HepG2 (cell line): ENCODE measurements at regions of chr1 and their contacts with region 1.

Region 1: DNA sequence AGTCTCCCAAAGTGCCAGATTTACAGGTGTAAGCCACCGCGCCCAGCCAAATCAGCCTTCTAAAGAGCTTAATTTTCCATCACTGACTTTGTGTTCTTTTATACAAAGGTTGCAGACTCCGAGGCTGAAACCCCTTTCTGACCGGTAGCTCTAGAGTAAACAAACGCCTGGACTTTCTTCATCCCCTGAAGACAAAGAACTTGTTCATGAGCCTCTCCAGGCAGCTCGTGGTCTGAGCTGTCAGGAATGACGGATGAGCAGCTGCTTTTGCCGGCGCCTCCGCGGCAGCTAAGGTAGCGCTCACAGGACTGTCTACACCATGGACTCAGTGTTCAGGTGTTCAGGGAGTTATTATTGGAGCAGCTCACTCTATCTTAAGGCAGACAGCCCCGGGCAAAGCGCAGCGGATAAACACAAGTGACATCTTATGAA is 128.5 kb upstream of the ERRFI1 start:
- DNase-seq: peak; percentile 99
- ATAC-seq: peak; percentile 97
- H3K4me3 ChIP-seq: peak overlapping the region in 2 of 3 experiments; percentile 15 to 31; a peak in 2 of 6 replicates
- H3K27ac ChIP-seq: peak overlapping the region; percentile 88
- H3K4me1 ChIP-seq: peaks cover 82% of the 10 kb centered on the region
- H3K27me3 ChIP-seq: no peaks in the 10 kb centered on the region
- CTCF ChIP-seq: no peak
- EP300 ChIP-seq: peak; percentile 89 to 97; a peak in 3 of 4 replicates
- POLR2A ChIP-seq: peak in 1 of 2 experiments; percentile 16; a peak in 1 of 4 replicates
- RAD21 ChIP-seq: peak; percentile 44; the same call in 1 of the 2 replicates

Region 2: GRCh38 chr1:7149080-7149838 is 1005.4 kb before region 1 on chr1:
- CTCF ChIA-PET with region 1: no interaction called
- POLR2A ChIA-PET with region 1: no interaction called
- in situ Hi-C with region 1: no loop called
- intact Hi-C with region 1: no loop called
- DNase-seq: no peak
- ATAC-seq: peak; percentile 71
- H3K4me3 ChIP-seq: peak overlapping the region in 1 of 3 experiments; percentile 47; a peak in 1 of 6 replicates
- H3K27ac ChIP-seq: no peak overlapping the region
- H3K4me1 ChIP-seq: peaks cover 10% of the 10 kb centered on the region
- H3K27me3 ChIP-seq: peaks cover 2 to 8% of the 10 kb centered on the region in 2 experiments; a peak in 3 of 5 replicates
- CTCF ChIP-seq: no peak
- EP300 ChIP-seq: no peak
- POLR2A ChIP-seq: no peak
- RAD21 ChIP-seq: no peak

Region 3: DNA sequence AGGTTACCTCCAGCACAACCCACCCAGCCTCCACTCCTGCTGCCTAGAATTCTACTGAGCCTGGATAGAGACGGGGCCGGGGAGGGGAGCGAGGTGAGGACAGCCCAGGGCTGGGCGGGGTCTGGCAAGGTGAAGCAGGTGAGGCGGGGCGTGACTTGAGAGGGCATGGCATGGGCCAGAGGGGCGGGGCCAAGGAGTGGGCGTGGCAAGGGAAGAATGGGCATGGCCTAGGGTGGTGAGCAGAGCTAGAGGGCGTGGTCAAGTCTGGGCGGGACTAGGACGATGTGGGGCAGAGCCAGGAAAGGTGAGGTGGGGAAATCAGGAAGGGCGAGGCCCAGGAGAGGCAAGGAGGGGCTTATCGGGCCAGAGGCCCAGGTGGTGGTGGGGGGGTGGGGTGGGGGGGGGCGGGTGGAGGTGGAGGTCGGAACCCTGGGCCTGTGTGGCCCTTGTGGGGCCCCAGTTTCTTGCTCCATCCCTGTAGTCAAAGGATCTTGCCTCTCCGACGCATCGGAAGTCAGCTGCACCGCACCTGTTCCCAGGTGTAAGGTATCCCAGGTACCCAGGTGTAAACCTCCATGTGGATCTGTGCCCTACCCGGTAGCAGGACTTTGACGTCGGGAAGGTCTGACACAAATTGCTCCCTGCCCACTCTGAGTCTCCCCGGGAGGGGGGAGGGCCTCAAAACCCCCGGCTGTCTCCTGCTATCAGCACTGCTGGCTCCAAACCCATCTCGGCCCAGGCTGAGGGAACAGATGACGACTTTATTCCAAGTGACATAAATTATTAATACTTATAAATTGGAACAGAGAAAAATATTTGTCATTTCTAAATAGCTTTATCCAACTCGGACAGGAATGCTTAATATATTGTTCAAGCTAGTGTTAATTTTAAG is 268.9 kb before region 1 on chr1:
- CTCF ChIA-PET with region 1: no interaction called
- POLR2A ChIA-PET with region 1: no interaction called
- in situ Hi-C with region 1: no loop called
- intact Hi-C with region 1: no loop called
- DNase-seq: no peak
- ATAC-seq: no peak
- H3K4me3 ChIP-seq: no peak overlapping the region
- H3K27ac ChIP-seq: no peak overlapping the region
- H3K4me1 ChIP-seq: no peaks in the 10 kb centered on the region
- H3K27me3 ChIP-seq: no peaks in the 10 kb centered on the region
- CTCF ChIP-seq: no peak
- EP300 ChIP-seq: no peak
- POLR2A ChIP-seq: no peak
- RAD21 ChIP-seq: no peak

Region 4: DNA sequence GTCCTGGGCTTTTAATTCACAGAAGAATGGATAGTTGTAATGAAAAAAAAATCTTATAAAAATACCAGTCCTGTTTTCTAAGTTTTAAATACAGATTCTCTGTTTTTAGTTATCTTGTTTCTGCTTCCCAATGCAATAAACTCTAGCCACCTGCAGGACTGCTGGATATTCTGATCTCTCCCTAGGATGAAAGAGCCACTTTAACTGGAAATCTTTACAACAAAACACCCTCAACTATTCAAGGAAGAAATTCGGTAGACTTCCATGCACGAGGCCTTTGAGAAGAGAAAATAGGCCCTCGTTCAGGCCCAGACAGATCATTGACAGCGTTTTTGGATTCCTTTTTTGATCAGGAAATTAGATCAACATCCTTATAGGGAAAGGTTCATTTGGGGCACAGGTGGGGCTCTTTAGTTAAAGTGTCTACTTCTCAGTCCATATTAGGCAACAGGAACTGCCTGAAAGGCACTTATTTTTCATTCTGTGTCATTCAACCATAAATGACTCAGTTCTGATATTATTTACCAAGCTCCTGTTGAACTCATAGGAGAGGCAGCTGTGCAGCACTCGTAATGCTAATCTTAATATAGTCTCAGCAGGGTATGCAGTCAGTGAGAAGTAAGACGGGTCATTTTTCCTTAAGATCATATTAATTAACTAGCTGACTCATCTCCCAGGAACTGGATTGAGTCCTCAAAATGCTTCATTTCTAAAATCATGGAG is 57.4 kb before region 1 on chr1:
- CTCF ChIA-PET with region 1: no interaction called
- POLR2A ChIA-PET with region 1: interaction called, 10 read pairs
- in situ Hi-C with region 1: no loop called
- intact Hi-C with region 1: no loop called
- DNase-seq: peak; percentile 74
- ATAC-seq: peak; percentile 49
- H3K4me3 ChIP-seq: no peak overlapping the region
- H3K27ac ChIP-seq: peak overlapping the region; percentile 72
- H3K4me1 ChIP-seq: peaks cover 67% of the 10 kb centered on the region
- H3K27me3 ChIP-seq: no peaks in the 10 kb centered on the region
- CTCF ChIP-seq: no peak
- EP300 ChIP-seq: peak in 1 of 2 experiments; percentile 56; a peak in 1 of 4 replicates
- POLR2A ChIP-seq: no peak
- RAD21 ChIP-seq: no peak

Region 5: DNA sequence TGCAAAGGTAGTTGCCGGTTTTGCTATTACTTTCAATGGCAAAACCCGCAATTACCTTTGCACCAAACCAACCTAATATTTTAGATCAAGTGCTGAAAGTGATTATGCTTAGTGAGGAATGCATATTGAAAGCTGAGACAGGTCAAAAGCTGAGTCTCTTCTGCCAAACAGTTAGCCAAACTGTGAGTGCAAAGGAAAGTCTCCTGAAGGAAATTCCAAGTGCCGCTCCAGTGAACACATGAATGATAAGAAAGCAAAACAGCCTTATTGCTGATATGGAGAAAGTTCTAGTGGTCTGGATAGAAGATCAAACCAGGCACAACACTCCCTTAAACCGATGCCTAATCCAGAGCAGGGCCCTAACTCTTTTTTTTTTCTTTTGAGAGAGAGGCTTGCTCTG is 45.4 kb before region 1 on chr1:
- CTCF ChIA-PET with region 1: no interaction called
- POLR2A ChIA-PET with region 1: no interaction called
- in situ Hi-C with region 1: no loop called
- intact Hi-C with region 1: no loop called
- DNase-seq: no peak
- ATAC-seq: no peak
- H3K4me3 ChIP-seq: no peak overlapping the region
- H3K27ac ChIP-seq: no peak overlapping the region
- H3K4me1 ChIP-seq: peaks cover 22% of the 10 kb centered on the region
- H3K27me3 ChIP-seq: no peaks in the 10 kb centered on the region
- CTCF ChIP-seq: no peak
- EP300 ChIP-seq: no peak
- POLR2A ChIP-seq: no peak
- RAD21 ChIP-seq: no peak

Region 6: GRCh38 chr1:8182034-8182761 is 27.6 kb after region 1 on chr1:
- CTCF ChIA-PET with region 1: no interaction called
- POLR2A ChIA-PET with region 1: no interaction called
- in situ Hi-C with region 1: no loop called
- intact Hi-C with region 1: loop called (anchors 1 kb)
- DNase-seq: peak; percentile 85
- ATAC-seq: peak; percentile 75
- H3K4me3 ChIP-seq: no peak overlapping the region; a peak in 1 of 6 replicates
- H3K27ac ChIP-seq: peak overlapping the region; percentile 64
- H3K4me1 ChIP-seq: peaks cover 54% of the 10 kb centered on the region
- H3K27me3 ChIP-seq: no peaks in the 10 kb centered on the region
- CTCF ChIP-seq: no peak
- EP300 ChIP-seq: peak in 1 of 2 experiments; percentile 76; a peak in 1 of 4 replicates
- POLR2A ChIP-seq: no peak
- RAD21 ChIP-seq: 0 out of 2 replicates have a peak, but pooled peaks have one; percentile 21

Region 7: DNA sequence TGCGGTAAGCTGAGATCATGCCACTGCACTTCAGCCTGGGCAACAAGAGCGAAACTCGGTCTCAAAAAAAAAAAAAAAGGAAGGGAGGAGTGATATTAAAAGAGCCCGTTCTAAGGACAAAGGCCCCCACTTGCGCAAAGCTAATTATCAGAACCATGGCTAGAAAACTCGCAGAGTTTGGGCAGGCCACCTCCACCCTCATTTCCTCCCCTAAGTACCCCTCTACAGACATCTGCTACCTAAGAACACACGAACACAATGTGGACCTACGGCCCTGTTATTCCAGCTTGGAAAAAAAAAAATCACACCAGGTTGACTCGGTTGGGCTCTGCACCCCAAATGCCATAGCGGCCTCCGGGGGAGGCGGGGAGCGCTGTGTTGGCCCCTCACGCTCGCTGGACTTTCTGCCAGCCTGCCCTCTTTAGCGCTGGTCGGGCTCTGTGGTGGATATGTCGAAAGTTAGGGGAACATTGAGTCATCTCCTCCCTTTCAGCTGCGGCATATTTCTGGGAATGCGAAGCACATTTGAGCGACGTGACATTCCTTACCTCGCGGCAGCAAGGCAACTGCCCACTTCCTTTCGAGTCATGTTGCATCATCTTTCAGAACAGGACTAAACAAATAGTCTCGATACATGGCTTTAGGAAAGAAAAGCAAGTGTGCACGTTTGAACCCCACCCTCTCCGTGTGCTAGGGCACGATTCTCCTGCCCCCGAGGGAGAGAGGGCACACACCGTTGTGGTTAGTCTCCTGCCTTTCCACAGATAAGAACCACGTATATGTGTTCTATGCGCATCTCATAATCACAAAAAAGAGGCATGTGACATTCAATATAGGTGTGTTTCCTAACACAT is 57.2 kb after region 1 on chr1:
- CTCF ChIA-PET with region 1: no interaction called
- POLR2A ChIA-PET with region 1: interaction called, 13 read pairs
- in situ Hi-C with region 1: no loop called
- intact Hi-C with region 1: loop called (anchors 1 kb)
- DNase-seq: peak; percentile 97
- ATAC-seq: peak; percentile 94
- H3K4me3 ChIP-seq: no peak overlapping the region
- H3K27ac ChIP-seq: peak overlapping the region; percentile 87
- H3K4me1 ChIP-seq: peaks cover 81% of the 10 kb centered on the region
- H3K27me3 ChIP-seq: no peaks in the 10 kb centered on the region
- CTCF ChIP-seq: peak; percentile 36; the same call in 1 of the 2 replicates
- EP300 ChIP-seq: peak in 1 of 2 experiments; percentile 98; a peak in 3 of 4 replicates
- POLR2A ChIP-seq: peak; percentile 59 to 71
- RAD21 ChIP-seq: no peak